ENCODE measurements at regions of chr5 and their contacts with region 1.

Region 1: DNA sequence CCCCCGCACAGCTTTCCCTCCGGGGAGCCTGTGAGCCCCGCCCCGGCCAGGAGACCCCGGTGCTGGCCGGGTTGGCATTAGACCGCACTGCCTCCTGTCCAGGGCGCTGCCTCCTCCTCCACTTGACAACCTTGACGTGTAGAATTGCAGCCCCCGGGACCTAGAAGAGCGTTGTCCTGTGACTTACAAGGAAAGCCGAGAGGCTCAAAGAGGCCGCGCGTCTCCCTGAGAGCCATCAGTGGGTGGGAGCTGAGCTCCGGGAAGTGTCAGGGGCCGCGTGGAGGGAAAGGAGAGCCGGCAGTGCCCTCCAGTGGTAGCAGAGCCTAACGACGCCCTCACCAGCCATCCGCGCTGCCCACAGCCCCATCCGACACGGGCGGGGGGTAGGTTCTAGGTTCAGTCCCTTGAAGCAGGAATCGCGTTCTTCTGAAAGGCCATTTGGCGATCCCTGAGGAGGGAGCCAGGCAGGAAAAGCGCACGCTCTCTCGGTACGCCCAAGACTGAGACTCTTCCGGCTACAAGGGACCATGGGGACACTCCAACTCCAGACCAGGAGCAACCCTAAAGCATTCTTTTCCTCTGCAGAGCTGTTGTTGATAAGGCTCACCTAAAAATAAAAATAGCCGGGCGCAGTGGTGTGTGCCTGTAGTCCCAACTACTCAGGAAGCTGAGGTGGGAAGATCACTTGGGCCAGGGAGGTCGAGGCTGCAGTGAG is 40.6 kb upstream of the SAP30L start:
- DNase-seq: no peak
- ATAC-seq: peak; percentile 100
- H3K4me3 ChIP-seq: no peak overlapping the region
- H3K27ac ChIP-seq: 0 out of 2 replicates have a peak overlapping the region, but pooled peaks have one; percentile 11
- H3K4me1 ChIP-seq: peaks cover 4% of the 10 kb centered on the region; the same call in 1 of the 2 replicates
- H3K27me3 ChIP-seq: no peaks in the 10 kb centered on the region
- CTCF ChIP-seq: peak; percentile 83 to 91 (median 90)
- EP300 ChIP-seq: no peak
- POLR2A ChIP-seq: peak; percentile 44; the same call in 1 of the 2 replicates
- RAD21 ChIP-seq: peak; percentile 92

Region 2: GRCh38 chr5:153974131-153974812 is 431.0 kb before region 1 on chr5:
- CTCF ChIA-PET with region 1: interaction called, 41 read pairs
- POLR2A ChIA-PET with region 1: no interaction called
- RAD21 ChIA-PET with region 1: interaction called, 23 read pairs
- SMC1A ChIA-PET with region 1: interaction called, 19 read pairs
- in situ Hi-C with region 1: no loop called
- intact Hi-C with region 1: loop called (anchors 2 kb)
- DNase-seq: no peak
- ATAC-seq: peak; percentile 83
- H3K4me3 ChIP-seq: no peak overlapping the region
- H3K27ac ChIP-seq: no peak overlapping the region
- H3K4me1 ChIP-seq: no peaks in the 10 kb centered on the region
- H3K27me3 ChIP-seq: peaks cover 2% of the 10 kb centered on the region in 2 experiments; a peak in 2 of 4 replicates
- CTCF ChIP-seq: peak; percentile 58 to 79 (median 75); a peak in 5 of 6 replicates
- EP300 ChIP-seq: no peak
- POLR2A ChIP-seq: no peak
- RAD21 ChIP-seq: peak; percentile 90

Region 3: DNA sequence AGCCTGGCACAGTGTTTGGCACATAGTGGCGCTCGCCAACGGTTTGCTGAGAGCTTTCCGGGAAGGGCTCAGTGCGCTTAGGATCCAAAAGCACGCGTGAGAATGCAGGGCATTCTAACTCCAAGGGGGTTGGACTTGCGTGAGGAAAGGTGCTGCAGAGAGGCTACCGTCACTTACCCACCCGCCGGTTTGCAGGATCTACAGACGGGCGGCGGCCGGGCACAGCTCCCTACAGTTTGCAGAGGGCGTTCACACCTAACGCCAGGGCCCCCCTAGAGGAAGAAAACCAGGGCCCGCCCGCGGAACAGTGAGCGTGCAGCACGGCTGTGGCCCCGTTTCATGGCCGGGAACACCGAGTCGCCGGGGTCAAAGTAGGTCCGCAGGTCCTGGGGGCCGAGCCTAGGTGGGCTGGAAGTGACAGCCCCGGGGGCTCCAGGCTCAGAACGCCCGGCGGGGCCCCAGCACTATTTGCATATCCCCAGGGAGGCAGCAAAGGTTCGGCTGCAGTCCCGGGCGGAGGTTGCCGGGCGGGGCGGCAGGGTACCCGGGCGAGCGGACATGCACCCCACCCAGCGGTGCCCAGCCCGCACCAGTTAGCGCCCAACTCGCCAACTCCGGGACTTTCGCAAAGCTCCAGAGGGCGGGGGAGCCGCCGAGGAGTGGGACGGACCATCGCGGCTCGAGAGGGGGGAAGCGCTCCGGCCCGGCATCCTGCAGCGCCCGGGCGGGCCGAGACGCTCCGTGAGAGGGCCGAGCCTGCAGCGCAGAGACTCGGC is 215.2 kb before region 1 on chr5:
- CTCF ChIA-PET with region 1: interaction called, 71 read pairs
- POLR2A ChIA-PET with region 1: interaction called, 4 read pairs
- RAD21 ChIA-PET with region 1: interaction called, 51 read pairs
- SMC1A ChIA-PET with region 1: interaction called, 45 read pairs
- in situ Hi-C with region 1: loop called (anchors 5 kb)
- intact Hi-C with region 1: loop called (anchors 2 kb)
- DNase-seq: no peak
- ATAC-seq: peak; percentile 84
- H3K4me3 ChIP-seq: peak overlapping the region; percentile 82
- H3K27ac ChIP-seq: peak overlapping the region; percentile 65
- H3K4me1 ChIP-seq: peaks cover 8% of the 10 kb centered on the region
- H3K27me3 ChIP-seq: peaks cover 0 to 4% of the 10 kb centered on the region in 2 experiments; a peak in 1 of 4 replicates
- CTCF ChIP-seq: peak; percentile 26 to 44 (median 43); a peak in 5 of 6 replicates
- EP300 ChIP-seq: no peak
- POLR2A ChIP-seq: 0 out of 2 replicates have a peak, but pooled peaks have one; percentile 45
- RAD21 ChIP-seq: no peak

Region 4: GRCh38 chr5:154202379-154203260 is 202.6 kb before region 1 on chr5:
- CTCF ChIA-PET with region 1: interaction called, 18 read pairs
- POLR2A ChIA-PET with region 1: no interaction called
- RAD21 ChIA-PET with region 1: interaction called, 28 read pairs
- SMC1A ChIA-PET with region 1: interaction called, 31 read pairs
- in situ Hi-C with region 1: no loop called
- intact Hi-C with region 1: no loop called
- DNase-seq: no peak
- ATAC-seq: peak; percentile 91
- H3K4me3 ChIP-seq: peak overlapping the region; percentile 66
- H3K27ac ChIP-seq: peak overlapping the region; percentile 86
- H3K4me1 ChIP-seq: peaks cover 39% of the 10 kb centered on the region
- H3K27me3 ChIP-seq: no peaks in the 10 kb centered on the region
- CTCF ChIP-seq: no peak
- EP300 ChIP-seq: no peak
- POLR2A ChIP-seq: peak; percentile 57
- RAD21 ChIP-seq: no peak

Region 5: DNA sequence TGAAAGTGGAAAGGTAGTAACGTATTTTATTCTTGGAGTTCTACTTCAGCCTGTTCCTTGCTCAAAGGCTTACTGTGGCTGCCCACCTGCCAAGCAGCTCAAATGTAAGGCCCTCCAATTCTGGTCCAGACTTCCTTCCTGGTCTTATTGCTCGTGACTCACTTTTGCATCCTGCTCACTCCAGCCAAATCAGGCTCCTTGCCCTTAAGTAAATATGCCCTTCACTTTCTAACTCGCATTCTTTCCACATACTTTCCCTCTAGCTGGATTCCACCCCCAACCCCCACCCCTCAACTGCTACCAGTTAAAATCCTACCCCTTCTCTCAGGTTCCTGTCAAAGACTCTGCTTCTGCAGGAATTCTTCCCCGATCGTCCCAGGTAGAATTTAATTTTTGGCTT is 118.1 kb before region 1 on chr5:
- CTCF ChIA-PET with region 1: interaction called, 10 read pairs
- POLR2A ChIA-PET with region 1: no interaction called
- RAD21 ChIA-PET with region 1: interaction called, 4 read pairs
- SMC1A ChIA-PET with region 1: interaction called, 4 read pairs
- in situ Hi-C with region 1: no loop called
- intact Hi-C with region 1: no loop called
- DNase-seq: no peak
- ATAC-seq: no peak
- H3K4me3 ChIP-seq: no peak overlapping the region
- H3K27ac ChIP-seq: no peak overlapping the region
- H3K4me1 ChIP-seq: peaks cover 32% of the 10 kb centered on the region
- H3K27me3 ChIP-seq: no peaks in the 10 kb centered on the region
- CTCF ChIP-seq: no peak
- EP300 ChIP-seq: no peak
- POLR2A ChIP-seq: no peak
- RAD21 ChIP-seq: no peak

Region 6: DNA sequence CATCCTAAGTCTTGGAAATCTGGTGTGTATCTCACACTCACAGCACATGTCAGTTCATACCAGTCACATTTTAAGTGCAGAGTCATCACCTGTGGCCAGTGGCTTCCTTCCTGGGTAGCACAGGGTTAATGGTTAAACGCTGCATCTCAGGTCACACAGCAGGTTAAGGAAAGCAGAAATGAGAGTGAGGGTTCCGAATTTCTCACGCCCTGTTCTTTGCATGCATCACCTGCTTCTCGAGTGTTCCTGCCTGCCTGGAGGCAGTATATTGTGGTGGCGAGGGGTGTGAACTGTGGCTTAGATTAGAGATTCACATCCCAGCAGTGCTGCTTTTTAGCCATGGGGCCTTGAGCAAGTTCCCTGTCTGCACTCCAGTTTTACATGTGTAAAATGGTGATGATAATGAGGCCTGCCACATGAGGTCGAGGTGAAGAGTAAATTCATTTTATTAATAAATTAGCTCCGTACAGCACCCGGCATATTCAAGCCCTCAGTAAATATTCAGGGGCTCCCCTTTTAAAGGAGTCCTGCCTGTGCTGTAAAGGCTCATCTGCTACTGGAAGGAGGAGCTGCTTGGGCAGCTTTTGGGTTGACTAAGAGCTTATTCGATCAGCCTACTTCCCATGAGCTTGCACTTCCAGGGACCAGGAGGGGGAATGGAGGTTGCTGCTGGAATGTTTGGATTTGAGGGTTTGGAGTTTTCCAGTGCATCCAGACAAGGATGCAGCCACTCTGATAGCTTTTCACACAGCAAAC is 20.6 kb before region 1 on chr5:
- CTCF ChIA-PET with region 1: interaction called, 13 read pairs
- POLR2A ChIA-PET with region 1: no interaction called
- RAD21 ChIA-PET with region 1: interaction called, 25 read pairs
- SMC1A ChIA-PET with region 1: interaction called, 23 read pairs
- in situ Hi-C with region 1: no loop called
- intact Hi-C with region 1: loop called (anchors 2 kb)
- DNase-seq: peak; percentile 99
- ATAC-seq: peak; percentile 97
- H3K4me3 ChIP-seq: no peak overlapping the region
- H3K27ac ChIP-seq: peak overlapping the region; percentile 95
- H3K4me1 ChIP-seq: peaks cover 16% of the 10 kb centered on the region
- H3K27me3 ChIP-seq: no peaks in the 10 kb centered on the region
- CTCF ChIP-seq: no peak
- EP300 ChIP-seq: peak; percentile 83 to 90
- POLR2A ChIP-seq: no peak
- RAD21 ChIP-seq: peak; percentile 23; the same call in 1 of the 2 replicates

Measured in GM12878 (cell line).